Gastrocnemius medialis (tissue), 4 donors: ENCODE measurements at regions of chr6 and their contacts with region 1.

Region 1: DNA sequence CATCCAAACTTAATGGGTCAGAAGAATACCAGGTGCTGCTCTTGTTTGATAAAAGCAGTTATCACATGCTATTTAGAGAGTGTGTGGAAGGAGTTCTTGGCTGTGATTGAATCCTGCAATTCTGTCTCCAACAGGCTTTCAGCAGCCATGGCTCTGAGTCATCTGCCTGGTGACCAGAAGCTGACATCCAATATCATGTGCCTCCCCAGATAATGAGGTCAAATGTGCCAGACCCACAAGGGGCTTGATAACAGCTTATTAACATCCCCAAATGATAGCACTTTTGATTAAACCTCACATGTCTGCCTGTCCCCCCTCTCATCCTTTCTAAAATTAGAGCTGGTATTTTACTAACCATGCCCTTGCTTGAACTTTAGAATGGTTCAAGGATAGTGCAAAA is 175.7 kb upstream of the PLN start:
- DNase-seq: peak; percentile 80 to 83
- ATAC-seq: peak; percentile 99 to 100
- H3K4me3 ChIP-seq: no peak overlapping the region
- H3K27ac ChIP-seq: peak overlapping the region; percentile 71 to 92 (median 86)
- H3K4me1 ChIP-seq: peaks cover 24 to 41% of the 10 kb centered on the region in 2 donors
- H3K27me3 ChIP-seq: no peaks in the 10 kb centered on the region
- CTCF ChIP-seq: no peak
- POLR2A ChIP-seq: peak in 1 of 2 donors; percentile 18

Region 2: DNA sequence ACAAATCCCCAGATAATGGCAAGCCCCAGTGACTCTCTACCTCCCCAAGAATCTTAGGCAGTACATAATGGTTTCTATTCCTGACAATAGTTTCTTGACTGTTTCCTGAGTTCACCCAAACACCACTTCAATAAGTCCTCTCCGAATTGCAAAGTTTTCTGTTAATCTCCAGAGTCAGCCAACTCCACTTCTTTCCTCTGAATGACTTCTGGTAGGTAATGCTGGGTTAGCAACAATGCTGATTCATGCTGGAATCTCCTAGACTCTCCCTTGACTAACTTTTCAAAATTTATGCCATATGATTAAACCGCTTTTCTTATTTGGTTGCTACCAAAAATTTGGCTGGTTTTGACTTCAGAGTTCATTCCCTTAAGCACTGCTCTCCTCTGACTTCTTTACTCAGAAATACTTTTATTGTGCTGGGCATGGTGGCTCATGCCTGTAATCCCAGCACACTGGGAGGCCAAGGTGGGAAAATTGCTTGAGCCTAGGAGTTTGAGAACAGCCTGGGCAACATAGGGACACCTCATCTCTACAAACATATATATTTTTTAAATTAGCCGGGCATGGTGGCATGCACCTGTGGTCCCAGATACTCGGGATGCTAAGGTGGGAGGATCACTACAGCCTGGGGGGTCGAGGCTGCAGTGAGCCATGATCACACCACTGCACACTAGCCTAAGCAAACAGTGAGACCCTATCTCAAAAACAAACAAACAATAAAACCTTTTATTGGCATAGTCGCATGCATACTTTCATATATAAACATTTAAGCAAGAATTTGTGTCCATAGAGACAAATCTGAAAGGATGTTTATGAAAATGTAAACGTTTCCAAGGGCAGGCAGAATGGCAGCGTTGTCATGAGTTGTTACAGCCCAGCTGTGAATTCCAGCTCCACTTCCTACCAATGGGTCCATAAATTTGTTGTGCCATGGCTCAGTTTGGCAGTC is 73.7 kb before region 1 on chr6:
- in situ Hi-C with region 1: no loop called
- intact Hi-C with region 1: loop called (anchors 5 kb)
- DNase-seq: no peak
- ATAC-seq: no peak
- H3K4me3 ChIP-seq: no peak overlapping the region
- H3K27ac ChIP-seq: no peak overlapping the region
- H3K4me1 ChIP-seq: peaks cover 19 to 25% of the 10 kb centered on the region in 2 donors
- H3K27me3 ChIP-seq: no peaks in the 10 kb centered on the region
- CTCF ChIP-seq: no peak
- POLR2A ChIP-seq: no peak

Region 3: DNA sequence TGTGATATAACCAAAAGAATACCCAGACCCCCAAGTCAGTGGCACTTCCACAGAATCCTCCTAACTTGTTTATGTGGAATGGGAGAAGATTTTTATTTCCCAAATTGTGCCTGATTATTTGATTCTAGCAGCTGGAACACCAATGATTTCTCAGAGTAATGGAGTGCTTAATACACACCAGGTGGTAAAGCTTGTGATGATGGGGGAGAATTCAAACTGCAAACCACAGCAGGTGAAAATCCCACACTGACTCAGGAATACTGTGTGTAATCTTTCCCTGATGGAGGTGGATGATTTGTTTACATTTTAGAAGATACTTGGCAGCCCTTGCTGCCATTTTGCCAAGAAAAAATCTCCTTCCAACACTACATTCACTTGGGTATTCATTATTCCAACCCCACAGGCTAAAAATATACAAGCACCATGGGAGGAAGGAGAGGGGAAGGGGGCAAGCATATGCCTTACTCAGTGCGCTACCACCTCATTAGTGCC is 37.0 kb before region 1 on chr6:
- in situ Hi-C with region 1: no loop called
- intact Hi-C with region 1: loop called (anchors 2 kb)
- DNase-seq: no peak
- ATAC-seq: no peak
- H3K4me3 ChIP-seq: no peak overlapping the region
- H3K27ac ChIP-seq: peak overlapping the region; percentile 80 to 90 (median 88)
- H3K4me1 ChIP-seq: peaks cover 28 to 29% of the 10 kb centered on the region in 2 donors
- H3K27me3 ChIP-seq: no peaks in the 10 kb centered on the region
- CTCF ChIP-seq: no peak
- POLR2A ChIP-seq: no peak

Region 4: GRCh38 chr6:118419448-118420394 is 47.3 kb after region 1 on chr6:
- in situ Hi-C with region 1: no loop called
- intact Hi-C with region 1: no loop called
- DNase-seq: no peak
- ATAC-seq: no peak
- H3K4me3 ChIP-seq: no peak overlapping the region
- H3K27ac ChIP-seq: no peak overlapping the region
- H3K4me1 ChIP-seq: no peaks in the 10 kb centered on the region
- H3K27me3 ChIP-seq: no peaks in the 10 kb centered on the region
- CTCF ChIP-seq: no peak
- POLR2A ChIP-seq: no peak

Region 5: DNA sequence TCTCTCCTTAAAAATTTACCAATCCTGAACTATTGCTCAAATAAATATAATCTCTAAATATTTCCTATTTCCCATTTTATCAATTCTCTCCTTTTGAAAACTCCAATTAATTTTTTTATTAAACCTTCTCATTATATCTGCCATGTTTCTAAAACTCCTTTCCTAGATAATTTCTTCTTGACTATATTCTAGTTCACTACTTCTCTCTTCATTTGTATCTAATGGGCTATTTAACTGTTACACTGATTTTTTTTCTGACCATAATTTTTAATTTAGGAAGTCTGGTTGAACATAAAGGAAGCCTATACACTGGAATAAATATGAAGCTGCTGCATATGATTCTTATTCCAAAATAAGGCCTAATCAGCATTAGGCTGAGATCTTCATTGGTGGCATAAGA is 79.4 kb after region 1 on chr6:
- in situ Hi-C with region 1: no loop called
- intact Hi-C with region 1: no loop called
- DNase-seq: no peak
- ATAC-seq: no peak
- H3K4me3 ChIP-seq: no peak overlapping the region
- H3K27ac ChIP-seq: no peak overlapping the region
- H3K4me1 ChIP-seq: no peaks in the 10 kb centered on the region
- H3K27me3 ChIP-seq: no peaks in the 10 kb centered on the region
- CTCF ChIP-seq: no peak
- POLR2A ChIP-seq: no peak

Region 6: DNA sequence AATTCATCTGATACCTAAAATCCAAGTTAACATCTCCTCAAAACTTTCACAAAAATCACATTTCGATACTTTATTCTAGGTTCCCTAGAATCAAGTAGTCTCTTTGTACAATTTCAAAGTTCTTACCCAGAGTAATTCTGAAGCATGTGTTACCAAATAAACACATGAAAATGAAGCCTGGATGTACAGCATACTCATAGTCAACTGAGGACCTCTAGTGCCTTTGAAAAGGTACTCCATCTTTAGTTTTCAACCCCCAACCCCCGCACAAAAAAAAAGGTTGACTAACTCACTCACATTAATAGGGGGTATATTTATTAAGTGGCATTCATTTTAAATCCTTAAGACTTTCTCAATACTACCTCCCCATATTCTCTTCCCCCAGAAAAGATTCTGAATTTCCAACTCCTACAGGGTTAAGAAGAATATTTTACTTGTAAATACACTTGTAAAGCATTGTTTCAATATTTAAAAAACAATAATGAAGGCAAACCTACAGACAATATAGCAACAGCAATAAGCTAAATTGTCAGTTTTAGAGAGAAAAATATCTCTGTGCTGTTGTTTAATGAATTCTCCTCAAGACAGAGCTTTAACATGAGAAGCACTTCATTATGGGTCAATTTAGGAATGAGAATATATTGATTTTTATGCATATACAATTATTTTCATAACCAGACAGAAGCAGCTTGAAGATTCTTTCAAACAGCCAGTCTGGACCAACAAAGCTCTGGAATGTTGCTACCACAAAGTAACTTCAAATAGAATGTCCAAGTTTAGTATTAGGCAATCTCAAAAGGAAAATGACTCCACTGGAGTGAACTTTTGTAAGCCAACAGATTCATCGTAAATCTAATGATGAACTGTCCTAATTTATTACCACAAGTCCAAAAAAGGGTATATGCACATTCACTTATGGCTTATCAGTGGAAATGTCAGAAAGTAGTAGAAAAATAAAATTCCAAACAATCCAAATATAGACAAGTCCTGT is 178.9 kb after region 1 on chr6:
- in situ Hi-C with region 1: no loop called
- intact Hi-C with region 1: loop called (anchors 5 kb)
- DNase-seq: no peak
- ATAC-seq: peak; percentile 78 to 81
- H3K4me3 ChIP-seq: peak overlapping the region; percentile 34 to 65 (median 52)
- H3K27ac ChIP-seq: peak overlapping the region; percentile 88 to 95 (median 94)
- H3K4me1 ChIP-seq: peaks cover 58 to 63% of the 10 kb centered on the region in 2 donors
- H3K27me3 ChIP-seq: no peaks in the 10 kb centered on the region
- CTCF ChIP-seq: peak; percentile 56 to 75 (median 72)
- POLR2A ChIP-seq: no peak